ENCODE measurements at regions of chr3 and their contacts with region 1.

Region 1: DNA sequence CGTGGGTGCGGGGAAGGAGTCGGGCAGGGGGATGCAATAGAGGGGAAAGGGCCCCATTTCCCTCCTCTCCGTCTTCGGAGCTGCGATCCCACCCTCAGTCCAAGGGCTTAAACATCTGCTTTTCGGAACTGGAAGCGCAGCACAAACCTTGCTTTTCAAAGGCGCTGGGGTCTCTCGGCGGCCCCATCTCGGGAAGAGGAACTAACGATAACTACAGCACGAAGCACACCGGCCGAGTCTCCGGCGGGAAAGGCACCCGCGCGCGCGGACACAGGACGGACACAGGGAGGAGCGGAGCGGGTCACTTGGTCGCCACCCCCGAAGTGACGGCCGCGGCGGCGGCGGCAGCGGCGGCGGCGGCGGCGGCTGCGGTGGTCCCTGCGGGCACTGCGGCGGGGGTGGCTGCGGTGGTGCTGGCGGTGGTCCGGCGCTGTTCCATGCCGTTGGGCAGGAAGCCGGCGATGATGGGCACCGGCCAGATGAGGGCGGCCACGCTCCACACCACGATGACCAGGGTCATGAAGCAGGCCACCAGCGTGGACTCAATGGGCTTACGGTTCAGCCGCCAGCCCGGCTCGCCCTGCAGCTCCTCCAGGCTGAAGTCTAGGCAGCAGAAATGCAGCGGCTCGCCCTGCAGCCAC is 1.1 kb downstream of the TMEM158 start:
- DNase-seq: no peak
- ATAC-seq: peak; percentile 69
- H3K4me3 ChIP-seq: peak overlapping the region; percentile 66 to 68
- H3K27ac ChIP-seq: peak overlapping the region; percentile 52; the same call in 1 of the 2 replicates
- H3K4me1 ChIP-seq: peaks cover 17 to 29% of the 10 kb centered on the region in 2 experiments
- H3K27me3 ChIP-seq: peaks cover 2% of the 10 kb centered on the region; the same call in 1 of the 2 replicates
- CTCF ChIP-seq: peak; percentile 34 to 46 (median 43); a peak in 5 of 6 replicates
- POLR2A ChIP-seq: no peak
- RAD21 ChIP-seq: peak; percentile 83

Region 2: DNA sequence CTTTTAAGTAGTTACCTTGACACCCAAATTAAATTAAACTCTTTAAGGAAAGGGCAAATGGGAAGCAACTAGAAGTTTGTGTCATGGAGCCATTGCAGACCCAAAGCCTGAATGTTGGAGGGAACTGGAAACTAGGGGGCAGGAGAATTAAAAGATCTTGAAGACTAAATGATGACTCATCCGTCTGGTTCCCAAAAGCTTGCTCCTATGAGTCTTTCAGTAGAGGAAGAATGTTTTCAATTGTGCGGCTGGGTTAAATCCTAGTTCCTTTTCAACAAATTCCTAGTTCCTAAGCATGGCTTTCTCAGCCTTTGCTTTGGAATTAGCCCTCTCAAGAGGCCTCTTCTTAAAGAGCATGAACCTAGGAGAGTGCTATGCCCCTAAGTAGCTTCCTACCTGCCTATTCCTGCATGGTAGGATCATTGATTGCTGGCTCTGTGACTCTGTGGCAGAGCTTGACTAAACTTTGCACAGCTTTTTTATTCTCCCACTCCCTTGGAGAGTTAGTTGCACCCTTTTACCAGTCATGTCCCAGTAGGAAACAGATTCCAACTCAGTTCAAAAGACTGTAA is 181.1 kb before region 1 on chr3:
- CTCF ChIA-PET with region 1: interaction called, 13 read pairs
- POLR2A ChIA-PET with region 1: interaction called, 4 read pairs
- RAD21 ChIA-PET with region 1: no interaction called
- intact Hi-C with region 1: no loop called
- DNase-seq: no peak
- ATAC-seq: peak; percentile 26; the same call in 1 of the 2 replicates
- H3K4me3 ChIP-seq: no peak overlapping the region
- H3K27ac ChIP-seq: no peak overlapping the region
- H3K4me1 ChIP-seq: peaks cover 8 to 20% of the 10 kb centered on the region in 2 experiments; a peak in 3 of 4 replicates
- H3K27me3 ChIP-seq: no peaks in the 10 kb centered on the region
- CTCF ChIP-seq: 0 out of 6 replicates have a peak, but pooled peaks of 1 of the 3 experiments have one; percentile 38
- POLR2A ChIP-seq: no peak
- RAD21 ChIP-seq: peak; percentile 66

Region 3: DNA sequence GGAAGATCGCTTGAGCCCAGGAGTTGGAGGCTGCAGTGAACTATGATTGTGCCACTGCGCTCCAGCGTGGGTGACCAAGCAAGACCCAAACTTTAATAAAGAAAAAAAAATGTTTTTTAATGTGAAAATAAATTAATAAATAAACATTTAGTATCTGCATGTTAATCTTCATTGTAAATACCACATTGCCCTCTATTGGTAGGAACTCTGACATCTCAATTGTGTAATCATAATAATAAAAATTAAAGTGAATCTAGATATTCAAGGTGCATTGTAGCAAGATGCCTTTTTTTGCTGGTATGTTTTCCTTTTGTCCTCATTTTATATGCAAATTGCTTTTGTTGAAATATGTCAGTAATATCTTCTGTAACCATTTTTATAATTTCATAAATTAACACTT is 274.6 kb after region 1 on chr3:
- CTCF ChIA-PET with region 1: interaction called, 17 read pairs
- POLR2A ChIA-PET with region 1: no interaction called
- RAD21 ChIA-PET with region 1: no interaction called
- intact Hi-C with region 1: loop called (anchors 2 kb)
- DNase-seq: peak; percentile 19
- ATAC-seq: no peak
- H3K4me3 ChIP-seq: no peak overlapping the region
- H3K27ac ChIP-seq: no peak overlapping the region
- H3K4me1 ChIP-seq: no peaks in the 10 kb centered on the region
- H3K27me3 ChIP-seq: no peaks in the 10 kb centered on the region
- CTCF ChIP-seq: peak in 2 of 3 experiments; percentile 24 to 82; a peak in 3 of 6 replicates
- POLR2A ChIP-seq: no peak
- RAD21 ChIP-seq: peak; percentile 79

Region 4: GRCh38 chr3:45546716-45547701 is 322.1 kb after region 1 on chr3:
- CTCF ChIA-PET with region 1: interaction called, 3 read pairs
- POLR2A ChIA-PET with region 1: no interaction called
- RAD21 ChIA-PET with region 1: no interaction called
- intact Hi-C with region 1: loop called (anchors 5 kb)
- DNase-seq: peak; percentile 13
- ATAC-seq: peak; percentile 41; the same call in 1 of the 2 replicates
- H3K4me3 ChIP-seq: no peak overlapping the region
- H3K27ac ChIP-seq: no peak overlapping the region
- H3K4me1 ChIP-seq: peaks cover 11 to 37% of the 10 kb centered on the region in 2 experiments
- H3K27me3 ChIP-seq: no peaks in the 10 kb centered on the region
- CTCF ChIP-seq: peak; percentile 49 to 83 (median 80); a peak in 5 of 6 replicates
- POLR2A ChIP-seq: no peak
- RAD21 ChIP-seq: peak; percentile 49

Region 5: DNA sequence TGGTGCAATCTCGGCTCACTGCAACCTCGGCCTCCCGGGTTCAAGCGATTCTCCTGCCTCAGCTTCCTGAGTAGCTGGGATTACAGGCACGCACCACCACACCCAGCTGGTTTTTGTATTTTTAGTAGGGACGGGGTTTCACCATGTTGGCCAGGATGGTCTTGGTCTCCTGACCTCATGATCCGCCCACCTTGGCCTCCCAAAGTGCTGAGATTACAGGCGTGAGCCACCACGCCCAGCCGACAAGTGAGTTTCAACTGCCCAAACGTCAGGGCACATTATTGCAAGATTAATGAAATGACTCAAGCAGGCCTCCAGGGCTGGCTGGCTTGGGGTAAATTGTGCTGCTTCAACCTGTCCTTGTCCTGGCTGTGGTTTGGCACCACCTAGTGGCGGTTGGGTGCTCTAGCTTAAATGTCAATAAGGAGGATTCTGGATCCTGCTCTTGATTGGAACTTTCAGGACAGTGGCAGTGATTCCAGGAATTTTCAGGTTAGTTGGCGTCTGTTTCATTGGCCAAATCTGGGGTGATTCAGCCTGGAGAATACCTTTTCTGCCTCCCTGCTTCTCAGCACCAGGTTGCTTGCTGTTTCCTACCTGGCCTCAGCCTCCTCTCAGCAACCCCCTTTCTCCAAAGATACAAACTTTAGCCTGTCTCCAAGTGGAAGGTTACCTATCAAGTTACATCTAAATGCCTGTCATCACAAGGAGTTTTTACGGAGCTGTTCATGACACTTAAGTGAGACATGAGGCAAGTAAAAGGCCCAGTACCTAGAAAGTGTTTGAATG is 431.8 kb after region 1 on chr3:
- CTCF ChIA-PET with region 1: interaction called, 6 read pairs
- POLR2A ChIA-PET with region 1: no interaction called
- RAD21 ChIA-PET with region 1: no interaction called
- intact Hi-C with region 1: loop called (anchors 1 kb)
- DNase-seq: peak; percentile 89
- ATAC-seq: peak; percentile 90
- H3K4me3 ChIP-seq: no peak overlapping the region
- H3K27ac ChIP-seq: no peak overlapping the region
- H3K4me1 ChIP-seq: peaks cover 0 to 15% of the 10 kb centered on the region in 2 experiments; a peak in 1 of 4 replicates
- H3K27me3 ChIP-seq: no peaks in the 10 kb centered on the region
- CTCF ChIP-seq: peak; percentile 86 to 93 (median 91)
- POLR2A ChIP-seq: no peak
- RAD21 ChIP-seq: peak; percentile 95

Region 6: GRCh38 chr3:45929042-45929679 is 704.2 kb after region 1 on chr3:
- CTCF ChIA-PET with region 1: no interaction called
- POLR2A ChIA-PET with region 1: no interaction called
- RAD21 ChIA-PET with region 1: no interaction called
- intact Hi-C with region 1: loop called (anchors 10 kb)
- DNase-seq: peak; percentile 10
- ATAC-seq: peak; percentile 98
- H3K4me3 ChIP-seq: no peak overlapping the region
- H3K27ac ChIP-seq: no peak overlapping the region
- H3K4me1 ChIP-seq: peaks cover under 1 to 5% of the 10 kb centered on the region in 2 experiments; a peak in 3 of 4 replicates
- H3K27me3 ChIP-seq: no peaks in the 10 kb centered on the region
- CTCF ChIP-seq: peak; percentile 69 to 83 (median 83)
- POLR2A ChIP-seq: no peak
- RAD21 ChIP-seq: peak; percentile 85